Sigmoid colon (tissue), 7 donors: ENCODE measurements at regions of chr7 and their contacts with region 1.

Region 1: DNA sequence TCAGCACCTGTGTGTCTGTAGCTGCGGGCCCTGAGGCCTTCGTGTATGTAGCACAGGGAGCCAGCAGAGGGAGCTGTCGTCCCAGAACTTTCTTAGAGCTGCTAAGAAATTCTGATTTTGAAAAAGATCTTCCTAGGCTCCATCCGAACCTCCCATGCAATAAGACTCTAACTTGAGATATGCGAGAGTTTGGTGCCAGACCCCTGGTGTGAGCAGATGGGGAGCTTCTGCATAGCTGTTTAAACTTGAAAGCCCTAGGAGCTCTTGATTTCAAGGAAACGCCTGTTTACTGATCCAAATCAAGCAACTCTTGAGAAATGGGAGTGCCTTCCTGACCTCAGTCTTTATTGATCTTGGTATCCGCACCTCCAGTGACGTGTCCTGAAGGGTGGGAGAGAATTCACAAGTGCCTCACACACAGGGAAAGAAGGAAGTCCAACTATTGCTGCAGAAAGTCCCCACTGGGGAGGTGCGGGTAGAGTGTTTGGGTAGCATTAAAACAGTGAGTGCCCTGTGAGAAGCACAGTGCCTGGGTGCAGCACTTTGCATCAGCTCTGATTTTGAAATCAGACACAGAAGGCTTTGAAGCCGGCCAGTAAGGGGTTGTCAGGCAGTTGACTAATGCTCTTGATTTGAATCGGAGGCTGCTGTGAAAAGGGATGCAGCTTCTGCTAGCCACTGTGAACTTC is 66.4 kb upstream of the STRIP2 start:
- DNase-seq: peak; percentile 82
- H3K4me3 ChIP-seq: peak overlapping the region in 2 of 4 donors; percentile 8 to 11
- H3K27ac ChIP-seq: peak overlapping the region in 1 of 4 donors; percentile 10
- H3K4me1 ChIP-seq: peaks cover 0 to 3% (median 0%) of the 10 kb centered on the region in 4 donors
- H3K27me3 ChIP-seq: no peaks in the 10 kb centered on the region
- CTCF ChIP-seq: peak in 3 of 4 experiments; percentile 66 to 79 (median 78)
- EP300 ChIP-seq: no peak
- POLR2A ChIP-seq: peak in 1 of 2 donors; percentile 80

Region 2: GRCh38 chr7:128982105-128982504 is 385.7 kb before region 1 on chr7:
- intact Hi-C with region 1: no loop called
- DNase-seq: no peak
- H3K4me3 ChIP-seq: no peak overlapping the region
- H3K27ac ChIP-seq: no peak overlapping the region
- H3K4me1 ChIP-seq: no peaks in the 10 kb centered on the region
- H3K27me3 ChIP-seq: no peaks in the 10 kb centered on the region
- CTCF ChIP-seq: no peak
- EP300 ChIP-seq: no peak
- POLR2A ChIP-seq: no peak

Region 3: GRCh38 chr7:129258649-129259389 is 109.0 kb before region 1 on chr7:
- intact Hi-C with region 1: no loop called
- DNase-seq: no peak
- H3K4me3 ChIP-seq: no peak overlapping the region
- H3K27ac ChIP-seq: no peak overlapping the region
- H3K4me1 ChIP-seq: no peaks in the 10 kb centered on the region
- H3K27me3 ChIP-seq: no peaks in the 10 kb centered on the region
- CTCF ChIP-seq: no peak
- EP300 ChIP-seq: no peak
- POLR2A ChIP-seq: no peak

Region 4: GRCh38 chr7:129468087-129468486 is 100.2 kb after region 1 on chr7:
- intact Hi-C with region 1: loop called (anchors 1 kb)
- DNase-seq: no peak
- H3K4me3 ChIP-seq: no peak overlapping the region
- H3K27ac ChIP-seq: no peak overlapping the region
- H3K4me1 ChIP-seq: no peaks in the 10 kb centered on the region
- H3K27me3 ChIP-seq: no peaks in the 10 kb centered on the region
- CTCF ChIP-seq: no peak
- EP300 ChIP-seq: no peak
- POLR2A ChIP-seq: no peak

Region 5: GRCh38 chr7:129635300-129636029 is 267.6 kb after region 1 on chr7:
- intact Hi-C with region 1: loop called (anchors 10 kb)
- DNase-seq: peak; percentile 74
- H3K4me3 ChIP-seq: no peak overlapping the region
- H3K27ac ChIP-seq: no peak overlapping the region
- H3K4me1 ChIP-seq: peaks cover 0 to 14% (median 0%) of the 10 kb centered on the region in 4 donors
- H3K27me3 ChIP-seq: no peaks in the 10 kb centered on the region
- CTCF ChIP-seq: peak; percentile 18 to 69 (median 48)
- EP300 ChIP-seq: no peak
- POLR2A ChIP-seq: no peak

Region 6: DNA sequence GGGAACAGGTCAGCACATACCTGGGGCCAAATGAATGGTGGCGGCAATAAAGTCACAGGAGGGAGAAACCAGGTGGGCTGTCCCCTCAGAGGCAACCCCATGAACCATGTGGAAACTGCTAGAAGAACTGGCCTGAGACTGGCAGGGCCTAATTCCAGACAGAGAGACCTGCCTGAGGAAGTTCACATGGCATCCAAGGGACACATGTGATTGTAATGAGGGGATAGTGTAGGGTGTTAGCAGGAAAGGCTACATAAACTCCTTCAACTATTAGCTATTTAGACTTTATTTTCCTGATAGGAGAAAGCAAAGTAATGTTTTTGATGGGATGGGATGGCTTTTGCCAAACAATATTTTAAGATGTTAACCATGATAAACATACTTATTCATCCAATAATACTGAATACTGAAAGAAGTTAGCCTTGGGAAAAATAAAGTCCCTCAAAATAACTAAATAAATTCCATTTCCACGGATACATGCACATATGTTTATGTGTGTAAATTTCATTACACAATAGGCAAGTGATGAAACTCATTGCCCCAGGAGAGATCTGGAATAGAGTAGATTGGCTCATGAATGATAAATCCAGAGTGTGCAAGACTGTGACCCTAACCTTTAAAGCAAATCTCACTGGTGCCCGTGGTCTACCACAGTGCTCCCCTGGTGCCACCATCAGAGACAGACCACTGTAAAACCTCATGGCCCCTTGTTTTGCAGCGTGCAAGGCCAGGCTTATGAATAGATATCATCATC is 380.7 kb after region 1 on chr7:
- intact Hi-C with region 1: no loop called
- DNase-seq: no peak
- H3K4me3 ChIP-seq: no peak overlapping the region
- H3K27ac ChIP-seq: no peak overlapping the region
- H3K4me1 ChIP-seq: no peaks in the 10 kb centered on the region
- H3K27me3 ChIP-seq: no peaks in the 10 kb centered on the region
- CTCF ChIP-seq: no peak
- EP300 ChIP-seq: no peak
- POLR2A ChIP-seq: no peak